Heart right ventricle (tissue), 16 donors: ENCODE measurements at regions of chr1 and their contacts with region 1.

Region 1: DNA sequence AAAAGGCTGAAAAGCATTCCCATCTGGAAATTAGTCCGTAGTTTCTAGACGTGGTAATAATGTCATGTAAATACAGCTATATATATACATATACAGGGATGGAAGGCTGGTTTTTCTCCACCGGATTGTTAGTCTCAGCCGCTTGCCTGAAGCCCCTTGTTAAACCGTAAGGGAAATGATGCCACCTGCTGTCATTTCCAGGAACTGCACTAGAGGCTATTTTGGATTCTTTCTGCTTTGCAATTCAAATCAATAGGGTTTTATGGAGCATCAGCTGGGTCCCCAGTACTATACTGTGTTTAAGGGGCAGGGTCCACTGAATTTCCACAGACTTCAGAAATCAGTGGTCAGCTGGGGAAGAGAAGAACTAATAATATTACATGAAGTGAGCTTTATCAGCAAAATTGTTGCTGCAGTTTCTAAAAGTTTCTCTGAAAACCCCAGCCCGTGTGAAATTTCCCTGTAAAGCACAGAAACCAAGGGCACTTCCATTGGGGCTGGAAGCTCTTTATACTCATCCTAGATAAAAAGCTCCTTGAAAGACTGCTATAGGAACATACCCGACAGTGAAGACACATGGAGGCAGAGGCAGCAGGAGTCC is 33.8 kb upstream of the MPZL1 start:
- DNase-seq: peak in 1 of 2 donors; percentile 86
- ATAC-seq: peak in 7 of 8 donors; percentile 20 to 65 (median 43)
- H3K4me3 ChIP-seq: no peak overlapping the region
- H3K27ac ChIP-seq: peak overlapping the region in 9 of 10 donors; percentile 37 to 83 (median 78)
- H3K4me1 ChIP-seq: peaks cover 3 to 74% (median 54%) of the 10 kb centered on the region in 9 donors
- H3K27me3 ChIP-seq: no peaks in the 10 kb centered on the region
- CTCF ChIP-seq: peak; percentile 89 to 97 (median 95)

Region 2: GRCh38 chr1:167553136-167554027 is 134.6 kb before region 1 on chr1 and contains the start of gene CREG1:
- intact Hi-C with region 1: loop called in 2 of 10 experiments (anchors 1 to 5 kb)
- DNase-seq: peak; percentile 92 to 95
- ATAC-seq: peak; percentile 99 to 100 (median 99)
- H3K4me3 ChIP-seq: peak within 1 kb of the TSS; percentile 50 to 92 (median 85)
- H3K27ac ChIP-seq: peak within 1 kb of the TSS; percentile 27 to 91 (median 82)
- H3K4me1 ChIP-seq: peaks cover 8 to 66% (median 24%) of the 10 kb centered on the region in 9 donors
- H3K27me3 ChIP-seq: no peaks in the 10 kb centered on the region
- CTCF ChIP-seq: peak in 2 of 9 donors; percentile 12 to 26
- total RNA-seq, gene CREG1: 56.9 to 113 (median 76.7) TPM

Region 3: DNA sequence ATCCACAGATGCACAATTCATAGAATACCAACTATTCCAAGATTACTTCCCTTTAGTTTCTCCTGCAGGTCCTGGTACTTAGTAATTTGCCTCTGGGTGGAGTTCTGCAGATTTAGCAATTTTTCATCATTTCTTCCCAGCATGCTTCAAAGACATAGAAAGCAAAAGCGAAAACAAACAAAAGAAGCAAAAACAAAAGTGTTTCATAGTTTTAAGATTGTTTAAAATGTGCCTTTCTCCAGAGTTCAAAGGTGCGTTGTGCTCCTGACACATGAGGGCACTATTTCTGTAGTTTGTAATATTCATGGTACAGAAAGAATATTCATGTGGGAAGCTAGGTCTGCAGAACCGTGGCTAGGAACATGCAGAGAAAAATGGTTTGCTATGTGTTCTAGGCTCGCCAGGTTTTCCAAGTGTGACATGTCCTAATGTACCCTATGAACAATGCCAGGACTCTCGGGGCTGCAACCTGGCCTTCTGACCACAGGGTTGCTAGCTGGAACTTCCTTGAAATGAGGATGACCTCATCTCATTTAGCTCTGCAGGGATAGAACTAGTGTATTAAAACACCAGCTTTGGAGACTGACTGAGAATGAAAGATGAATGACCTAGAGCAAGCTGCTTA is 88.0 kb before region 1 on chr1:
- intact Hi-C with region 1: loop called (anchors 1 to 5 kb)
- DNase-seq: peak in 1 of 2 donors; percentile 51
- ATAC-seq: peak; percentile 73 to 89 (median 82)
- H3K4me3 ChIP-seq: peak overlapping the region in 1 of 10 donors; percentile 15
- H3K27ac ChIP-seq: peak overlapping the region in 7 of 10 donors; percentile 35 to 91 (median 58)
- H3K4me1 ChIP-seq: peaks cover 5 to 45% (median 33%) of the 10 kb centered on the region in 9 donors
- H3K27me3 ChIP-seq: no peaks in the 10 kb centered on the region
- CTCF ChIP-seq: peak; percentile 47 to 86 (median 72)

Region 4: DNA sequence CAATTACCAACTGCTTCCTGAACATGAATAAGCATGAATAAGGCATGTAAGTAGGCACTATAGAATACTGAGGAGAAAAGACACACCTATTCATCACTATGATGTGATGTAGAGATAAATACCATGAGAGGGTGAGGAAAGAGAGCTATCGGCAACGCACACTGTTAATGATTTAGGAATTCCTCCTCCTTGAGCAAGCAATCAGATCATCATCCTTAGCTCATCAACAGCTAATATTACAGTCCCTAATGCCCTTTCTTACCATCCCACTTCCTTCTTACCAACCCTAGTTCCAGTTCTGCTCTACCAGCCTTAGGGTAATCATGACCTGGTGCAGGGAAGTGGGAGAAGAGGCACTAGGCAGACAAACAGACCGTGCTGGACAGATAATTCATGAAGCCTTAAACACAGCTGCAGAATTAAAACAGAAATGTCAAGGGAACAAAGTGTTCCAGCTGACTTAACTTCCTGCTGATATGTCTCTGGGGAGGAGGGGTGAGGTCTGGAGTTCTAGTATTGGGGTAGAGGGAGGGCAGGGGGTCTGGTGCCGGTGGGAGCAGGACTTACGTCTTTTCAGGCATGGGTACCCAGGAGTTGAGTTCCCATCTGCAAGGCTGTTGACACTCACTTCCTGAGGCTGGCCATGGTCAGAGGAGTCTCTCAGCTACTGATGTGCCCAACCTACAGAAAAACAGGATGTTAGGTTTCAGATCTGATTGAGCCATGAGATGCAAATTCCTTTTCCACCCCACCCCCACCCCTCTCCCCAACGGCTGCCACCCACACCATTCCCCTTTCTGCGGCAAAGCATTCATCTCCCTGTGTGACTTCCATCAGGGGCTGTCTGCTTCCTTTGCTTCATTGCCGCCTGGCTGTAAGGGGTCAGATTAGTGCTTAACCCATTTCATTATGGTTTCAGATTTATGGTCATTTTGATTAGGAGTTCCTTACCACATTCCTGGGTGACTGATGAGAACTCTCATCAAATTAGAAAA is 70.6 kb before region 1 on chr1:
- intact Hi-C with region 1: loop called in 1 of 10 experiments (anchors 5 kb)
- DNase-seq: peak in 1 of 2 donors; percentile 54
- ATAC-seq: peak; percentile 74 to 91 (median 88)
- H3K4me3 ChIP-seq: peak overlapping the region in 6 of 10 donors; percentile 4 to 32 (median 17)
- H3K27ac ChIP-seq: peak overlapping the region; percentile 41 to 89 (median 68)
- H3K4me1 ChIP-seq: peaks cover 0 to 62% (median 22%) of the 10 kb centered on the region in 9 donors
- H3K27me3 ChIP-seq: no peaks in the 10 kb centered on the region
- CTCF ChIP-seq: no peak

Region 5: DNA sequence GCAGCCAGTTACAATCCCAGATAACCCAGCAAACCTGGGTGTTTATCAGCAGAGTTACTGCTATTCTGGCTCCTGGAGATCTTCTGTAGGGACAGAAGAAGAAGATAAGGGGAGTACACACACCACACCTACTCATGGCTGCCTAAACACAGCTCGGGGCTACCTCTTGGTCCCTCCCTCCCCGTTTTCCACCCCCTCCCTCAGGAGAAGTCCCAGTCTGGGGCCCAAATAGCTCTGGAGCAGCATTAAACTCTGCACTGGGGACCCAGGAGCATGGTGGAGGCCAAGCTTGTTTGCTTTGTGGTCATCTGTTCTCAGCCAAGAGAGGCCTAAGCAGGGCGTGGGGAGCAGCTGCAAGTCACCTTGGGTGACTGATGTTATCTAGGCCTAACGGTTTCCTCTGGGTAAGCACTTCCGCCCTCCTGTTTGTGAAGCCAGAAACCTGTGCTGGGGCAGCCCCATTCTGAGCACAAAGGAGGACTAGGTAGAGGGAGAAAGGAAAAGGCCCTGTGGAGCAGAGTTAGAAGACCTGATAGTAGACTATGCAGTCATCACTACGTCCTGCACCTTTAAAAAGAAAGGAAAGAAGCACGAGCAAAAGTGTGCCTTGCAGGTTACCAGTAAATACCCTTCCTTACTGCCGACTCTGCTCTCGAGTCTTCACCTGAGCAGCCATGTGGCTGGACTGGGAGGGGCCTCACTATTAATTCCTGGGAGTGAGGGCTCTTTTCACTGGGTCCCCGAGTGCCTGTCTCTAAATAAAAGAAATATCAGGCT is 60.0 kb before region 1 on chr1:
- intact Hi-C with region 1: loop called in 6 of 10 experiments (anchors 2 to 10 kb)
- DNase-seq: no peak
- ATAC-seq: peak in 6 of 8 donors; percentile 14 to 48 (median 24)
- H3K4me3 ChIP-seq: peak overlapping the region in 1 of 10 donors; percentile 87
- H3K27ac ChIP-seq: peak overlapping the region; percentile 29 to 99 (median 97)
- H3K4me1 ChIP-seq: peaks cover 14 to 58% (median 51%) of the 10 kb centered on the region in 9 donors
- H3K27me3 ChIP-seq: no peaks in the 10 kb centered on the region
- CTCF ChIP-seq: no peak

Region 6: DNA sequence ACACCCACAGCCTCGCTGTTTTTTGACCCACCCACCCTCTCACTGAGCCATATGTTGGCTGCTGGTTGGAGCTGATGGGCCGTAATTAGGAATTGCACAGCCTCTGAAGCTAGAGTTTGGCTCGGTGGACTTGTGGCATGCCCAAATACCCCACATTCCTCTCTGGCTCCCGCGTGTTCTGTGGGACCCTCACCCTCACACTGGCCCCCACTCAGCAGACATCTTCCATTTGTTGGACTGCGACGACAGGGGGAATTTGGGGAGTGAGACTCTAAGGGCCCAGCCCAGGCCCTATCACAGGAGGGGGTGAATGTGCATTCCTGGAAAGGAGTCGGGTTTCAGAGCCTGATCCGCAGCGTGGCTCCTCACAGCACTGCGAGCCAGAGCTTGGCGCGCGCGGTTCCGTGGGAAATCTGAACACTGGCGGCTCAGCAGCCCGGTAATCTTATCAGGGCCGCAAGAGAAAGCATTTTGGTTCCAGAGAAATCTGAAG is 52.8 kb before region 1 on chr1:
- intact Hi-C with region 1: loop called in 6 of 10 experiments (anchors 2 to 10 kb)
- DNase-seq: peak; percentile 71 to 73
- ATAC-seq: peak; percentile 59 to 82 (median 71)
- H3K4me3 ChIP-seq: peak overlapping the region in 6 of 10 donors; percentile 11 to 26 (median 21)
- H3K27ac ChIP-seq: peak overlapping the region; percentile 41 to 98 (median 76)
- H3K4me1 ChIP-seq: peaks cover 17 to 88% (median 72%) of the 10 kb centered on the region in 9 donors
- H3K27me3 ChIP-seq: no peaks in the 10 kb centered on the region
- CTCF ChIP-seq: no peak

Region 7: GRCh38 chr1:167650269-167651160 is 37.5 kb before region 1 on chr1:
- intact Hi-C with region 1: loop called in 2 of 10 experiments (anchors 5 kb)
- DNase-seq: peak in 1 of 2 donors; percentile 33
- ATAC-seq: peak in 7 of 8 donors; percentile 34 to 66 (median 50)
- H3K4me3 ChIP-seq: no peak overlapping the region
- H3K27ac ChIP-seq: peak overlapping the region; percentile 59 to 87 (median 74)
- H3K4me1 ChIP-seq: peaks cover 33 to 99% (median 90%) of the 10 kb centered on the region in 9 donors
- H3K27me3 ChIP-seq: no peaks in the 10 kb centered on the region
- CTCF ChIP-seq: no peak